ENCODE measurements at regions of chr14 and their contacts with region 1.

Region 1: GRCh38 chr14:80575763-80576162 is 364.5 kb upstream of the DIO2 start:
- DNase-seq: no peak

Region 2: DNA sequence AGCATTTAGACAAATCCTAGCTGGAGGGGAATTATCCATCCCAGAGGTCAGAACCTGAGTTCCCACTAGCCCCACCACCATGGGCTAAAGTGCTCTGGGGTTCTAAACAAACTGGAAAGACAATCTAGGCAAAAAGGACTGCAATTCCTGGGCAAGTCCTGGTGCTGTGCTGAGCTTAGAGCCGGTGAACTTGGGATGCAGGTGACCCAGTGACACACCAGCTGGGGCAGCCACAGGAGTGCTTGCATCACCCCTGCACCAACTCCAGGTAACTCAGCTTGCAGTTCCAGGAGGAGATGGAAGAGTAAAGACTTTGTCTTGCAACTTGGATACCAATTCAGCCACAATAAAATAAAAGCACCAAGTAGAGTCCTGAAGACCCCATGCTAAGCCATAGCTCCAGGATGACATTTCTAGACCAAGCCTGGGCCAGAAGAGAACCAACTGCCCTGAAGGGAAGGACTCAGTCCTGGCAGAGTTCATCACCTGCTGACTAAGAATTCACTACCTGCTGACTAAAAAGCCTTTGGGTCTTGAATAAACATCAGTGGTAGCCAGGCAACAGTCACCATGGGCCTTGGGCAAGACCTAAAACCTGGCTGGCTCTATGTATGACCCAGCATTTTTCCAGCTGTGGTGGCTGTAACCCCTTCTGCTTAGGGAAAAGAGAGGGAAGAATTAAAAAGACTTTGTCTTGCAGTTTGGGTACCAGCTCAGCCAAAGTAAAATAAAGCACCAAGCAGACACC is 141.0 kb before region 1 on chr14:
- intact Hi-C with region 1: no loop called
- DNase-seq: no peak

Region 3: DNA sequence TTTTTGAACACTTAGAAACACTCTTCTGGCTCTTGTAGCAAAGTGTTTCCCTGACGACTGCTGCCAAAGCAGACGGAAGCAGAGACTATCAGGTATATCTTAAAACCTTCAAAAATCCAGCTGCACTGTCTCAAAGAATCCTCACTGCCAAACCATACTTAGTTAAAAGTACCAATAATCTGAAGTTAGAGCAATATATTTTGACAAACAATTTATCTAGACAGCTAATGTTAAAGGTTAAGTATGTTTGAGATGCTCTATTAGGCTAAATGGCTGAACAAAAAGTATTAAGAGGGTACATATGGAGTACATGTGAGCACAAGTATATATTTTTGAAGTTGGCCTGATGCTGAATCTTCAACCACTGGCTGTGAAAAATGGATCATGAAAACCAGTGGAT is 32.6 kb before region 1 on chr14:
- intact Hi-C with region 1: loop called in 1 of 2 experiments (anchors 2 kb)
- DNase-seq: no peak

Measured in posterior vena cava (tissue), 2 donors.